Activated B cell treated with CpG ODN at 0.5 μM for 24 hours (primary cell): ENCODE measurements at regions of chr3 and their contacts with region 1.

Region 1: DNA sequence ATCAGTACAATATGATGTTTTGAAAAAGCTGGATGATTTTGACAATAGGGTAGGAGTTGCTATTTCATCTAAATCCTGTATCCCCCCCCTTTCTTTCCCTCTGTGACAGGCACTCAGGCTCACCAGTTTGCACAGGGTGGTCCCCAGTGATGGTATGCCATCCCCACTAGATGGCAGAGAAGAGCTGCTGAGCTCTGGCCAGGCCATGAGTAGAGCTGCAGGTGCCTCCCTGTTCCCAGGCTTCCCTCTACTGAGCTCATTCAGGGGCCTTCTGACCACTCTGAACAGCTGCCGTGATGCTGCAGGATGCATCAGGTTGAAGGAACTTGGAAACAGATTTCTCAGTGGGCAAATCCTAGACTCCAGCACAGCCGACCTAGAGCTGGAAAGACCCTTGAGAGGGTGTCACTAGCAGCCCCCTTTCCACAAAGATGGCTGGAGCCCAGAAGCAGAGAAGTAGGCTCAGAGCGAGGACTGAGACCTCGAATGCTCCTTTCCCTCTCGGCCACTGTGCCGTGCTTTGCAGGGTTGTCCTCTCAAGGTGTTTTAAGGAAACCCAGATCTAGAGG is 45.1 kb downstream of the EFCAB12 start:
- DNase-seq: peak; percentile 26
- ATAC-seq: peak; percentile 98
- H3K4me3 Mint-ChIP-seq: no peak overlapping the region
- H3K27ac Mint-ChIP-seq: no peak overlapping the region
- H3K4me1 Mint-ChIP-seq: no peaks in the 10 kb centered on the region
- H3K27me3 Mint-ChIP-seq: no peaks in the 10 kb centered on the region
- CTCF ChIP-seq: peak; percentile 23

Region 2: DNA sequence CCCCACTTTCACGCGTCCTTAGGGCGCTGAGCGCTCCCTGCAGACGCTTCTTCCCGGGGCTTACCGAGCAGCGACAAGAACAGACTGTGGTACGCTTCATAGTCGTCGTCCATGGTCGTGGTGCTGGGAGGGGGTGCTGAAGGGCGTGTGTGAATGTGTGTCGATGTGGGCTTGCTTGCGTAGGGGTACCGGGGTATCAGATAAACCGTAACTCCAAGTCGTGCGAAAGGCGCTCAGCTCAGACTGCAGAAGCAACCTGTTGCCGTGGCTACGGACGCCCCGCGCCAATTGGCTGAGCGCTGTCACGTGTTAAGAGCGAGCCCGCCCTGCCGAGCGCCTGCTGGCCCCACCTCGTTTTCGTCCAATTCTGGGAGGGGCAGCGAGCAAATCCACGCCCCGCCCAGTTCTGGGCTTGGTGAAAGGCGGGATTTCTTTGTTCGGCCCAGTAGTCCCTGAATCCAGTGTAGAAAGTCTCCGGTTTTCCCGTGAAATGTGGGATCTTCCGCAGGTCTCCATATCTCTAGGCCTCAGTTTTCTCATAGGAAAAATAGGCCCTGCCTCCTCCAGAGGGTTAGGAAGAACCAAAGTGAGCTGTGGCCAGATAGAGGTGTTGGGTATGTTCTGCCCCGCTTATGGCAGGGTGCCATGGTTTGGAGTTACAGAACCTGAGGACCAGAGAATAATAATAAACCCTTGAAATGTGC is 45.2 kb after region 1 on chr3 and contains the start of gene EFCAB12:
- CTCF ChIA-PET with region 1: interaction called, 9 read pairs
- POLR2A ChIA-PET with region 1: no interaction called
- intact Hi-C with region 1: loop called (anchors 2 kb)
- DNase-seq: peak; percentile 83
- ATAC-seq: peak; percentile 91
- H3K4me3 Mint-ChIP-seq: peak within 1 kb of the TSS; percentile 85
- H3K27ac Mint-ChIP-seq: peak within 1 kb of the TSS; percentile 83
- H3K4me1 Mint-ChIP-seq: peaks cover 64% of the 10 kb centered on the region
- H3K27me3 Mint-ChIP-seq: no peaks in the 10 kb centered on the region
- CTCF ChIP-seq: no peak
- total RNA-seq, gene EFCAB12: 1.8 and 2.1 TPM in 2 replicates

Region 3: GRCh38 chr3:129994883-129995559 is 611.6 kb after region 1 on chr3:
- CTCF ChIA-PET with region 1: no interaction called
- POLR2A ChIA-PET with region 1: no interaction called
- intact Hi-C with region 1: loop called (anchors 5 kb)
- DNase-seq: no peak
- ATAC-seq: no peak
- H3K4me3 Mint-ChIP-seq: no peak overlapping the region
- H3K27ac Mint-ChIP-seq: no peak overlapping the region
- H3K4me1 Mint-ChIP-seq: no peaks in the 10 kb centered on the region
- H3K27me3 Mint-ChIP-seq: peaks cover 26% of the 10 kb centered on the region
- CTCF ChIP-seq: no peak